ENCODE measurements at regions of chr6 and their contacts with region 1.

Region 1: GRCh38 chr6:74467533-74468215 is 738.2 kb downstream of the COL12A1 start:
- DNase-seq: no peak
- ATAC-seq: peak; percentile 68
- H3K4me3 ChIP-seq: no peak overlapping the region
- H3K27ac ChIP-seq: no peak overlapping the region
- H3K4me1 ChIP-seq: no peaks in the 10 kb centered on the region
- H3K27me3 ChIP-seq: no peaks in the 10 kb centered on the region
- CTCF ChIP-seq: no peak
- EP300 ChIP-seq: no peak
- POLR2A ChIP-seq: no peak
- RAD21 ChIP-seq: no peak

Region 2: GRCh38 chr6:74447013-74447412 is 20.7 kb before region 1 on chr6:
- CTCF ChIA-PET with region 1: interaction called, 11 read pairs
- POLR2A ChIA-PET with region 1: interaction called, 14 read pairs
- RAD21 ChIA-PET with region 1: interaction called, 32 read pairs
- SMC1A ChIA-PET with region 1: interaction called, 10 read pairs
- in situ Hi-C with region 1: no loop called
- intact Hi-C with region 1: no loop called
- DNase-seq: peak; percentile 27
- ATAC-seq: peak; percentile 87
- H3K4me3 ChIP-seq: no peak overlapping the region
- H3K27ac ChIP-seq: no peak overlapping the region
- H3K4me1 ChIP-seq: no peaks in the 10 kb centered on the region
- H3K27me3 ChIP-seq: no peaks in the 10 kb centered on the region
- CTCF ChIP-seq: no peak
- EP300 ChIP-seq: peak in 1 of 2 experiments; percentile 41; a peak in 2 of 4 replicates
- POLR2A ChIP-seq: no peak
- RAD21 ChIP-seq: no peak

Region 3: GRCh38 chr6:74755778-74756177 is 288.1 kb after region 1 on chr6:
- CTCF ChIA-PET with region 1: no interaction called
- POLR2A ChIA-PET with region 1: no interaction called
- RAD21 ChIA-PET with region 1: no interaction called
- SMC1A ChIA-PET with region 1: no interaction called
- in situ Hi-C with region 1: no loop called
- intact Hi-C with region 1: no loop called
- DNase-seq: no peak
- ATAC-seq: no peak
- H3K4me3 ChIP-seq: no peak overlapping the region
- H3K27ac ChIP-seq: no peak overlapping the region
- H3K4me1 ChIP-seq: no peaks in the 10 kb centered on the region
- H3K27me3 ChIP-seq: no peaks in the 10 kb centered on the region; a peak in 1 of 4 replicates
- CTCF ChIP-seq: no peak
- EP300 ChIP-seq: no peak
- POLR2A ChIP-seq: no peak
- RAD21 ChIP-seq: no peak

Measured in GM12878 (cell line).